Activated naive CD4-positive, alpha-beta T cell treated with anti-CD3 and anti-CD28 coated beads for 36 hours (primary cell): ENCODE measurements at regions of chr2 and their contacts with region 1.

Region 1: GRCh38 chr2:174682578-174683391 is 81.5 kb downstream of the CHRNA1 start:
- DNase-seq: peak; percentile 49
- H3K4me3 Mint-ChIP-seq: peak overlapping the region; percentile 84
- H3K27ac Mint-ChIP-seq: peak overlapping the region; percentile 83
- H3K4me1 Mint-ChIP-seq: peaks cover 50% of the 10 kb centered on the region
- H3K27me3 Mint-ChIP-seq: no peaks in the 10 kb centered on the region

Region 2: GRCh38 chr2:174577967-174578589 is 104.7 kb before region 1 on chr2:
- CTCF ChIA-PET with region 1: interaction called, 114 read pairs
- intact Hi-C with region 1: loop called (anchors 1 kb)
- DNase-seq: peak; percentile 77
- H3K4me3 Mint-ChIP-seq: no peak overlapping the region
- H3K27ac Mint-ChIP-seq: peak overlapping the region; percentile 30
- H3K4me1 Mint-ChIP-seq: peaks cover 69% of the 10 kb centered on the region
- H3K27me3 Mint-ChIP-seq: no peaks in the 10 kb centered on the region

Region 3: DNA sequence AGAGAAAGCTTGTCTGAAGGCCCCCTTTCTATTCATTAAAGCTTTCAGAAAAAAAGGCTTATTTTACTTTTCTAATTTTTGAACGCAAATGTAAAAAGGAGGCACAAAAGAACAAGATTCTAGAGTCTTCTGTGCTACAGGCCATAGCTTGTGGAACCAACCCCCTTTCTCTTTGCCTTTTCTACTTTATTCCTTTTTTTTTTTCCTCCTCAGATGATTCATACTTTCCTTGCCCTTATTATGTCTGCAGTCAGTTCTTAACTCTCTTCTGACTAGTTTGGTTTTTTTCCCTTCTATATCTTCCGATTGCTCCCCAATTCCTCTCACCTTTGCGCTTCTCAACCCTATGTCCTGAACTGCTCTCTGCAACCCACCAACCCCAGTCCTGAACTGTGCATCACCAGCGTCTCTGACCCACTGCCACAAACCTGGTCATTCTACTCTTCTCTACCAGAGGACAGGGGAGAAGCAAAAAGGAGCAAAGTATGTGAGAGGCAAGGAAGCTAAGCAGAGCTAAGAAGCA is 28.3 kb before region 1 on chr2:
- CTCF ChIA-PET with region 1: interaction called, 12 read pairs
- intact Hi-C with region 1: loop called (anchors 1 kb)
- DNase-seq: no peak
- H3K4me3 Mint-ChIP-seq: no peak overlapping the region
- H3K27ac Mint-ChIP-seq: no peak overlapping the region
- H3K4me1 Mint-ChIP-seq: peaks cover 43% of the 10 kb centered on the region
- H3K27me3 Mint-ChIP-seq: no peaks in the 10 kb centered on the region

Region 4: GRCh38 chr2:175074478-175074877 is 391.7 kb after region 1 on chr2:
- CTCF ChIA-PET with region 1: no interaction called
- intact Hi-C with region 1: no loop called
- DNase-seq: no peak
- H3K4me3 Mint-ChIP-seq: no peak overlapping the region
- H3K27ac Mint-ChIP-seq: no peak overlapping the region
- H3K4me1 Mint-ChIP-seq: no peaks in the 10 kb centered on the region
- H3K27me3 Mint-ChIP-seq: no peaks in the 10 kb centered on the region